PC-9 (cell line): ENCODE measurements at regions of chr2 and their contacts with region 1.

Region 1: GRCh38 chr2:157810037-157810436 is 66.1 kb downstream of the ACVR1 start:
- DNase-seq: no peak
- H3K4me3 ChIP-seq: no peak overlapping the region
- H3K27ac ChIP-seq: no peak overlapping the region
- H3K4me1 ChIP-seq: no peaks in the 10 kb centered on the region
- H3K27me3 ChIP-seq: no peaks in the 10 kb centered on the region
- CTCF ChIP-seq: no peak

Region 2: DNA sequence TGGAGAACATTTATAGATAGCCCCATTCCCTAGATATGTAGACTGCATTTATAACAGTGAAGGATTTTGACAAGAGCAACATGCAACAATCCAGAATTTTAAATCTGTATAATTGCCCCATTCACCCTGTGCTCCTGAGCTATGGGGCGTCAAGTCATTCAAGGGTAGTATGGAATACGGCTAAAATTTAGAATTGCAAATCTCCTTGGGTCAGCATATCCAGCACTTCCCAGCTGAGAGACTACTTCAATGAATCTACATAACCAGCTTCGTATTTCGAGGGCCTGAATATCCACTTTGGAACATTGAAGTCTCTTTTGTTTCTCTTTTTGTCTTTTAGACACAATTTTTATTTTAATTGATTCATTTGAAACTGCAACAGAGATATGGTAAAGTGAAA is 152.9 kb before region 1 on chr2:
- CTCF ChIA-PET with region 1: no interaction called
- POLR2A ChIA-PET with region 1: no interaction called
- intact Hi-C with region 1: no loop called
- DNase-seq: no peak
- H3K4me3 ChIP-seq: no peak overlapping the region
- H3K27ac ChIP-seq: no peak overlapping the region
- H3K4me1 ChIP-seq: no peaks in the 10 kb centered on the region
- H3K27me3 ChIP-seq: no peaks in the 10 kb centered on the region
- CTCF ChIP-seq: no peak

Region 3: GRCh38 chr2:157699806-157700205 is 110.2 kb before region 1 on chr2:
- CTCF ChIA-PET with region 1: no interaction called
- POLR2A ChIA-PET with region 1: no interaction called
- intact Hi-C with region 1: no loop called
- DNase-seq: no peak
- H3K4me3 ChIP-seq: no peak overlapping the region
- H3K27ac ChIP-seq: no peak overlapping the region
- H3K4me1 ChIP-seq: no peaks in the 10 kb centered on the region
- H3K27me3 ChIP-seq: no peaks in the 10 kb centered on the region
- CTCF ChIP-seq: no peak

Region 4: GRCh38 chr2:157856187-157856515 is 46.1 kb after region 1 on chr2:
- CTCF ChIA-PET with region 1: no interaction called
- POLR2A ChIA-PET with region 1: interaction called, 12 read pairs
- intact Hi-C with region 1: no loop called
- DNase-seq: no peak
- H3K4me3 ChIP-seq: no peak overlapping the region
- H3K27ac ChIP-seq: peak overlapping the region; percentile 74
- H3K4me1 ChIP-seq: 0 out of 2 replicates have a peak, but pooled peaks cover 4% of the 10 kb centered on the region
- H3K27me3 ChIP-seq: no peaks in the 10 kb centered on the region
- CTCF ChIP-seq: no peak

Region 5: DNA sequence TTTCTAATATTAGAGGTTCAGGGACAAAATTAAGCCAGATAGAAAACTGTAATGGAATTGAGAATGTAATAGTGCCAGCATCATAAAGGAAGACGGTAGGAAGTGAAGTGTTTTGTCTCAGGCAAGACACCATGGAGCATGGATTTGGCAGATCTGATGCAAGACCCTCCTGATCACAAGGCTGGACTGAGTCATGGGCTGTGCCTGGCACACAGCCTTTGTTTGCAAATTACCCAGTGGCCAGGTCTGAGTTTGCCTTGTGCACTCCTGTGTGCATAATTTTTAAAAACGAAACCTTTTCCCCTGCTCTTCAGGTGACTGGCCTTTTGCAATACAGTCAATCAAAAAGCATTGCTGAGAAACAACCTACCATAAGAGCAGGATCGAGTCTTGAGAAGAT is 289.7 kb after region 1 on chr2:
- CTCF ChIA-PET with region 1: no interaction called
- POLR2A ChIA-PET with region 1: no interaction called
- intact Hi-C with region 1: no loop called
- DNase-seq: no peak
- H3K4me3 ChIP-seq: no peak overlapping the region
- H3K27ac ChIP-seq: no peak overlapping the region
- H3K4me1 ChIP-seq: 0 out of 2 replicates have a peak, but pooled peaks cover 9% of the 10 kb centered on the region
- H3K27me3 ChIP-seq: no peaks in the 10 kb centered on the region
- CTCF ChIP-seq: no peak

Region 6: DNA sequence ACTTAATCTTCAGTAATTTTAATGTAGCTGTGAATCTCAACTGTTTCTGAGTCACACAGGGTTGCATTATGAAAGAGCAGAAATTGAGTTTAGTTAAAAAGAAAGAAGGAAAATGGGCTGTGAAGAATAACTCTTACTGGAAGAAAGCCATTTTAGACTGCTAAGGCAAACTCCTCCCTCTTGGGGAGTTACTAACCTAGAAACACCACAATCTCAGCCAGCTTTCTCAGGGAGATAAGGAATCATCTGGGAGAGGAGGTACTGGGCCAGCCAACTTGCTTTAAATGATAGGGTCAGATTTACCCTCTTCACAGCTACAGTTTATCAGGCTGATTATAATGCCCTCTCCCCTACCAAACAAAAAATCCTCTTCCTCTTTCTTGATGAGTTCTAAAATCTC is 527.0 kb after region 1 on chr2:
- CTCF ChIA-PET with region 1: no interaction called
- POLR2A ChIA-PET with region 1: no interaction called
- intact Hi-C with region 1: no loop called
- DNase-seq: no peak
- H3K4me3 ChIP-seq: no peak overlapping the region
- H3K27ac ChIP-seq: no peak overlapping the region
- H3K4me1 ChIP-seq: no peaks in the 10 kb centered on the region
- H3K27me3 ChIP-seq: no peaks in the 10 kb centered on the region
- CTCF ChIP-seq: no peak